Naive thymus-derived CD4-positive, alpha-beta T cell (primary cell): ENCODE measurements at regions of chr3 and their contacts with region 1.

Region 1: DNA sequence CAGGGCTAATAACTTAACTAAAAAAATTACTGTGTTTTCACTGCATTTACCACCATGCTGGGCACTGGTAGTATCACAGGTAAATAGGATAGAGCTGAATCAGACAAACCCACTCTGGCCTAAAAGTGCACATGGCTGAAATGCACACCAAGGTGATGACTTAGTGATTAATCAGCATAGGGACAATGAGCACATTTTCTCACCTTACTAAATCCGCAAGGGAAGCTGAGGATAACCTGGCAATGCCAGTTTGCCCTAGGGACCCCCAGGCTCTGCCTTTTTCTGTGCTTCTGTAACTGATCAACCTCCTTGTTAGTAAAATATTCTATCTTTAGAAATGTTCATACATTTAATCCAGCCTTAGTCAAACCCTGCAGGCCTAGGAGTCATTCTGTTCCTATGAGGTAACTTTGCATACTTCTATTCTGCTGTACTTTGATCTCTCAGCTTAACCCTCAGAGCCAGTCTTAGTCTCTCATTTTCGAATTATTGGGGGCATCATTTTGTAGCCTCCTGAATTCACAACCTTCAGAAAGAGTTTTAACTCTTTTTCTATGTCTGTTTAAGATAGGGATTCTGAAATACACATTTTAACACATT is 562.9 kb upstream of the KCNMB2 start:
- DNase-seq: no peak
- ATAC-seq: no peak
- H3K4me3 ChIP-seq: no peak overlapping the region
- H3K4me3 Mint-ChIP-seq: no peak overlapping the region
- H3K27ac ChIP-seq: no peak overlapping the region
- H3K27ac Mint-ChIP-seq: no peak overlapping the region
- H3K4me1 ChIP-seq: no peaks in the 10 kb centered on the region
- H3K4me1 Mint-ChIP-seq: no peaks in the 10 kb centered on the region
- H3K27me3 ChIP-seq: no peaks in the 10 kb centered on the region
- H3K27me3 Mint-ChIP-seq: no peaks in the 10 kb centered on the region

Region 2: GRCh38 chr3:177878192-177878591 is 95.1 kb before region 1 on chr3:
- CTCF ChIA-PET with region 1: no interaction called
- POLR2A ChIA-PET with region 1: no interaction called
- intact Hi-C with region 1: loop called in 1 of 2 experiments (anchors 5 kb)
- DNase-seq: no peak
- ATAC-seq: no peak
- H3K4me3 ChIP-seq: no peak overlapping the region
- H3K4me3 Mint-ChIP-seq: no peak overlapping the region
- H3K27ac ChIP-seq: no peak overlapping the region
- H3K27ac Mint-ChIP-seq: no peak overlapping the region
- H3K4me1 ChIP-seq: no peaks in the 10 kb centered on the region
- H3K4me1 Mint-ChIP-seq: peaks cover 2 to 24% (median 16%) of the 10 kb centered on the region in 7 donors
- H3K27me3 ChIP-seq: no peaks in the 10 kb centered on the region
- H3K27me3 Mint-ChIP-seq: no peaks in the 10 kb centered on the region

Region 3: DNA sequence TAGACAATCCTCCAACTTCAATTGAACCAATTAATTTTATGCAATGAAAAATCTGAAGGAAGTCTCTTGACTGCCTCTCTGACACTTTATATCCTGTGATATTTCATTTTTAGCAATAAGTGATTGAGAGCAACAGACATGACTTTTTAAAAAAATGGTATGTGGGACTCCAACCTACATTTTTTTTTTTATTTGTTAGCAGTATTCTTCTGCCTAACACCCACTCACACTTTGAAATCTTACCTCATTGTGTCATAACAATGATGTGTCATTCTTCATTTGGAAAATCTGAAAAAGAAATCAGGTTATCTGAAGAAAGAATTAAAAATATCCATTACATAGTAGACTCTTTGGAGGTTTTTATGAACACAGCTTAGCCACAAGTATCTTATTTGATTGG is 21.6 kb after region 1 on chr3:
- CTCF ChIA-PET with region 1: no interaction called
- POLR2A ChIA-PET with region 1: no interaction called
- intact Hi-C with region 1: no loop called
- DNase-seq: no peak
- ATAC-seq: no peak
- H3K4me3 ChIP-seq: no peak overlapping the region
- H3K4me3 Mint-ChIP-seq: no peak overlapping the region
- H3K27ac ChIP-seq: no peak overlapping the region
- H3K27ac Mint-ChIP-seq: peak overlapping the region in 3 of 9 donors; percentile 16 to 52 (median 40)
- H3K4me1 ChIP-seq: peaks cover 6 to 8% of the 10 kb centered on the region in 2 donors
- H3K4me1 Mint-ChIP-seq: peaks cover 5 to 28% (median 23%) of the 10 kb centered on the region in 7 donors
- H3K27me3 ChIP-seq: no peaks in the 10 kb centered on the region
- H3K27me3 Mint-ChIP-seq: no peaks in the 10 kb centered on the region